Panc1 (cell line): ENCODE measurements at regions of chr9 and their contacts with region 1.

Region 1: GRCh38 chr9:128940271-128940921 is 7.0 kb downstream of the DOLK start:
- DNase-seq: no peak
- ATAC-seq: no peak
- H3K4me3 ChIP-seq: no peak overlapping the region
- H3K27ac ChIP-seq: no peak overlapping the region
- H3K4me1 ChIP-seq: no peaks in the 10 kb centered on the region
- H3K27me3 ChIP-seq: no peaks in the 10 kb centered on the region
- CTCF ChIP-seq: no peak

Region 2: GRCh38 chr9:128845155-128845931 is 95.1 kb before region 1 on chr9:
- CTCF ChIA-PET with region 1: interaction called, 3 read pairs
- POLR2A ChIA-PET with region 1: interaction called, 13 read pairs
- in situ Hi-C with region 1: no loop called
- intact Hi-C with region 1: no loop called
- DNase-seq: no peak
- ATAC-seq: peak; percentile 77
- H3K4me3 ChIP-seq: no peak overlapping the region
- H3K27ac ChIP-seq: no peak overlapping the region
- H3K4me1 ChIP-seq: no peaks in the 10 kb centered on the region
- H3K27me3 ChIP-seq: no peaks in the 10 kb centered on the region
- CTCF ChIP-seq: no peak

Region 3: DNA sequence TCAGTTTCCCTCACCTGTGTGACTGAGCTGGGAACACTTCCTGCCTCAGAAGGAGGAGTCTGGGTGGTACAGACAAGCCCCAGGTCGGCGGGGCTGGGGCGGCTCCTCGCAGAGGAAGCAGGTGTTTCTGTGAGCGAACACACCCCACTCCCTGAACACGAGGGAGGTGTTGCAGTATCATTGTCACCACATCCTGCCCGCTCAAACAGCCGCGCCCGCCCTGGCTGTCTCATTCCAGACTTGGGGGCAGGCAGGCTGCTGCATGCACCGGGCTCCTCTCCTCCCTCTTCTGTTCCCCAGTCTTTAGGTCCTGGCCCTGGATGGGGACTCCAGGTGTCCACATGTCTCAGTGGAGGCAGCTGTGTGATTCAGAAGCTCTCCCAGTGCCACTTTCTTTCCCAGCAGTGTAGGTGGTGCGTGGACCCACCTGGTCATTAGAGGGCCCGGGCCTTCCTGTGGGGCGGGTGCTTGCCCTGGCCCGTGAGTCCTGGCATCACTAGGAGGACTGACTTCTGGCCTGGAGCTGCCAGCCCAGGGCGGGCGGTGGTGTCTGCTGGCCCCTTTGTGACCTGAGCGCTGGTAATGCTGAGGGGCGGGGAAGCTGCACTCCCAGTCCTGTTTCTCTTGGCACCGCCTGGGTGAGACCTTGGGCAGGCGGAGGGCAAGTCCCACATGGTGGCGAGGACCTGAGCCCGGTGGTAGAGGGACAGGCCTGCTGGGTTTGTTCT is 37.9 kb before region 1 on chr9:
- CTCF ChIA-PET with region 1: no interaction called
- POLR2A ChIA-PET with region 1: no interaction called
- in situ Hi-C with region 1: no loop called
- intact Hi-C with region 1: no loop called
- DNase-seq: no peak
- ATAC-seq: no peak
- H3K4me3 ChIP-seq: no peak overlapping the region
- H3K27ac ChIP-seq: no peak overlapping the region
- H3K4me1 ChIP-seq: no peaks in the 10 kb centered on the region
- H3K27me3 ChIP-seq: no peaks in the 10 kb centered on the region
- CTCF ChIP-seq: no peak

Region 4: GRCh38 chr9:129006328-129007034 is 66.1 kb after region 1 on chr9:
- CTCF ChIA-PET with region 1: no interaction called
- POLR2A ChIA-PET with region 1: no interaction called
- in situ Hi-C with region 1: no loop called
- intact Hi-C with region 1: no loop called
- DNase-seq: no peak
- ATAC-seq: peak; percentile 85
- H3K4me3 ChIP-seq: no peak overlapping the region
- H3K27ac ChIP-seq: no peak overlapping the region
- H3K4me1 ChIP-seq: peaks cover 8% of the 10 kb centered on the region; the same call in 1 of the 2 replicates
- H3K27me3 ChIP-seq: no peaks in the 10 kb centered on the region
- CTCF ChIP-seq: peak; percentile 94

Region 5: DNA sequence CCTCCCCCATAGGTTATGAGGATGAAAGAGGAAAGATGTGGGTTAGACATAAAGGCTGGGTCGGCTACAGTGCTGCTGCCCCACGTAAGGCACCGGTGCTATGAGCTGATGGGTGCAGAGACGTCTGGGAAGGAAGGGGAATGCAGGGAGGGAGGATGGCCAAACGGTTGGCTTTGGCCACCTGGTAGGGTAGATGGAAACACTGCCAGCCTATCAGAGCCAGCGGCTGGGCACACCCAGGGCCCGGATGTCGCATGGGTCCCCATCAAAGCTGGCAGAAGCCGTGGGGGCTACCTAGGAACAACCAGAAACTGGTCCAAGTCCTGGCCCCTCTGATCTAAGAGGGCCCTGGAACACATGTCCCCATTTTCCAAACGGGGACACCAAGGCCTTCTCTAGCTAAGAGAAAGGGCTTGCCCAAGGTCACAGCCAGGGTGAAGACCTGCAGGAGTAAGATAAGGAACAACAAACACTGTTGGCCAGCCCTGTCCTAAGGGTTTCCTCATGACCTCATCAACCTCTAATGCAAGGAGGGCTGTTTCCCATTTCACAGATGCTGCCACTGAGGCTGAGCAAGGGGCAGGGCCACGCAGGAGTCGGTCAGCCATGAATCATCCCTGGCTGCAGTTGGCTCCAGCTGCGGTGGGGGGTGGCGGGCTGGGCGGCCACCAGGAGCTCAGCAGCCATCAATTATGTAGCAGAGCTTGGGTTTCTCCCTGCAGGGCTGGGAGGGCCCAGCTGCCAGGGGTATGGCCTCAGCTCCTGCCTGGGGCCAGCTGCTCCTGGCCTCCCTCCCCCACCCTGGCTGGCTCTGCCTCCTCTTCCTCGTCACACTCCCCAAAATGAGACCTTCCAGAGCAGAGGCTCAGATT is 82.9 kb after region 1 on chr9:
- CTCF ChIA-PET with region 1: interaction called, 3 read pairs
- POLR2A ChIA-PET with region 1: interaction called, 10 read pairs
- in situ Hi-C with region 1: no loop called
- intact Hi-C with region 1: no loop called
- DNase-seq: no peak
- ATAC-seq: no peak
- H3K4me3 ChIP-seq: no peak overlapping the region
- H3K27ac ChIP-seq: no peak overlapping the region
- H3K4me1 ChIP-seq: peaks cover 16% of the 10 kb centered on the region
- H3K27me3 ChIP-seq: no peaks in the 10 kb centered on the region
- CTCF ChIP-seq: no peak